Ovary (tissue), 10 donors: ENCODE measurements at regions of chr15 and their contacts with region 1.

Region 1: GRCh38 chr15:70569685-70570231 is 193.6 kb downstream of the UACA start:
- DNase-seq: no peak
- H3K4me3 ChIP-seq: no peak overlapping the region
- H3K27ac ChIP-seq: no peak overlapping the region
- H3K4me1 ChIP-seq: peaks cover 1% of the 10 kb centered on the region
- H3K27me3 ChIP-seq: no peaks in the 10 kb centered on the region
- CTCF ChIP-seq: no peak
- EP300 ChIP-seq: no peak
- POLR2A ChIP-seq: no peak

Region 2: GRCh38 chr15:70395164-70395563 is 174.6 kb before region 1 on chr15:
- intact Hi-C with region 1: no loop called
- DNase-seq: no peak
- H3K4me3 ChIP-seq: no peak overlapping the region
- H3K27ac ChIP-seq: no peak overlapping the region
- H3K4me1 ChIP-seq: no peaks in the 10 kb centered on the region
- H3K27me3 ChIP-seq: no peaks in the 10 kb centered on the region
- CTCF ChIP-seq: no peak
- EP300 ChIP-seq: no peak
- POLR2A ChIP-seq: no peak

Region 3: DNA sequence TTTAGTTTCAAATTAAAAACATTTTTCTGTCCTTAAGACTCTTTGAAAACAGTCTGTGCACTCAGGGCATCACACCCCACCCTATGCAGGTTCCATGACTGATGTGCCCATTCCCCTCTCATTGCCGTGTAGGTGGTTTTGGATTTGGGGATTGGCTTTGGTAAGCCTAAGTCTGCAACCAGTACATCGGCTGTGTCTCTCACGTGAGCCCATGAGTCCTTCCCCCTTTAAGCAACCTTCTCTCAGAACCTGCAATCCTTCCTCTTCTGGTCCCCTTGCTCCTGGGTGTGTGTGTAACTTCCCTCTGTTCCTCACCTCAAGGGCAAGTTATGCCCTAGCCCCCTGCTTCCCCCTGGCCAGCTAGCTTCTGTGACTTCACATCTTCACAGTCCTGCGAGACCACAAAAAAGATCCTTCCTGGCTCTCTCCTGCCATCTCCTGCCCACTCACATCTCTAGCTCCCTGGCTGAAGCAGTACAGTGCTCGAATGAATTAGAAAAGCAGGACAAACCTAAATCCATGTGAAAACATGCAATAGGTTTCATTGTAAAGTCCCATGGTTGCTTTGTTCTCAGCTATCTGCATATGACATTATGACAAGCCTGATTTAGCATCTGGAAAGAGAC is 66.9 kb after region 1 on chr15:
- intact Hi-C with region 1: loop called in 2 of 4 experiments (anchors 10 kb)
- DNase-seq: peak; percentile 27 to 52 (median 33)
- H3K4me3 ChIP-seq: no peak overlapping the region
- H3K27ac ChIP-seq: no peak overlapping the region
- H3K4me1 ChIP-seq: peaks cover 2% of the 10 kb centered on the region
- H3K27me3 ChIP-seq: no peaks in the 10 kb centered on the region
- CTCF ChIP-seq: peak in 2 of 3 donors; percentile 39 to 44
- EP300 ChIP-seq: no peak
- POLR2A ChIP-seq: no peak